ENCODE measurements at regions of chr7 and their contacts with region 1.

Region 1: DNA sequence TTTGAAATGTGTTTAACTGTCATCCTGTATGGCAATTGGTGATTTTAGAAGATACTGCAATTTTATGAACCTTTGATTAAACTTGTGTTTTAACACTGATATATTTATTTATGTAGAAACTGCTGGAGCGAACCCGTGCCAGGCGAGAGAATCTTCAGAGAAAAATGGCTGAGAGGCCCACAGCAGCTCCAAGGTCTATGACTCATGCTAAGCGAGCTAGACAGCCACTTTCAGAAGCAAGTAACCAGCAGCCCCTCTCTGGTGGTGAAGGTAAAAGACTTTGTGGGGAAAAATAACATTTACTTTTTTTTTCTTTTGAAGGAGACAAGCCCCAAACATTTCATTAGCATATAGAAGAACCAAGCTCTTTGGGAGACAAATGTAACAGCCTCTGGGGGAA is 6.5 kb downstream of the ANLN start:
- DNase-seq: no peak
- H3K4me3 ChIP-seq: no peak overlapping the region
- H3K27ac ChIP-seq: no peak overlapping the region; the same call in 1 of the 2 replicates
- H3K4me1 ChIP-seq: peaks cover 36% of the 10 kb centered on the region
- H3K27me3 ChIP-seq: no peaks in the 10 kb centered on the region
- CTCF ChIP-seq: no peak

Region 2: GRCh38 chr7:35716038-35716803 is 679.9 kb before region 1 on chr7:
- CTCF ChIA-PET with region 1: no interaction called
- POLR2A ChIA-PET with region 1: interaction called, 12 read pairs
- intact Hi-C with region 1: no loop called
- DNase-seq: no peak
- H3K4me3 ChIP-seq: no peak overlapping the region
- H3K27ac ChIP-seq: no peak overlapping the region
- H3K4me1 ChIP-seq: no peaks in the 10 kb centered on the region
- H3K27me3 ChIP-seq: no peaks in the 10 kb centered on the region
- CTCF ChIP-seq: no peak

Region 3: GRCh38 chr7:36207451-36208291 is 188.5 kb before region 1 on chr7:
- CTCF ChIA-PET with region 1: no interaction called
- POLR2A ChIA-PET with region 1: no interaction called
- intact Hi-C with region 1: no loop called
- DNase-seq: peak; percentile 51 to 100
- H3K4me3 ChIP-seq: no peak overlapping the region
- H3K27ac ChIP-seq: peak overlapping the region; percentile 75
- H3K4me1 ChIP-seq: peaks cover 38% of the 10 kb centered on the region
- H3K27me3 ChIP-seq: no peaks in the 10 kb centered on the region
- CTCF ChIP-seq: peak; percentile 46; the same call in 1 of the 2 replicates

Region 4: DNA sequence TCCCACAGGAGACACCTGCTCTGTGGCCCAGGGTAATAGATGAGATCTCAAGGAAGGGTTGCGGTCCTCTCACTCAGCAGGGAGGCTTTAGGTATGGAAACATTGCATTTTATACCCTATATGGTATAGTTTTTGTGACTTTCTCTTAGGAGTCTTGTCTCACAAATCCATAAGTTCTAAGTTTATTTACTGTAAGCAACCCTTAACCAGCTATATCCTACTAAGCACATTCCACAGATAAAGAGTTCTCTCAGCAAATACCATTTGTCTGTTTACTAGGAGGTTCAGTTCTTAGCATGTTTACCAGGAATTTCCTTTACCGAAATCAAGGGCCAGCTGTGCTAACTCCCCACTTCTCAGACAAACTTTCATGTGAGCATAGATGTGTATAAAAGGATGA is 60.4 kb after region 1 on chr7:
- CTCF ChIA-PET with region 1: no interaction called
- POLR2A ChIA-PET with region 1: no interaction called
- intact Hi-C with region 1: no loop called
- DNase-seq: no peak
- H3K4me3 ChIP-seq: no peak overlapping the region
- H3K27ac ChIP-seq: no peak overlapping the region
- H3K4me1 ChIP-seq: no peaks in the 10 kb centered on the region
- H3K27me3 ChIP-seq: no peaks in the 10 kb centered on the region
- CTCF ChIP-seq: no peak

Region 5: GRCh38 chr7:36708767-36709166 is 312.6 kb after region 1 on chr7:
- CTCF ChIA-PET with region 1: no interaction called
- POLR2A ChIA-PET with region 1: no interaction called
- intact Hi-C with region 1: no loop called
- DNase-seq: no peak
- H3K4me3 ChIP-seq: no peak overlapping the region
- H3K27ac ChIP-seq: no peak overlapping the region
- H3K4me1 ChIP-seq: no peaks in the 10 kb centered on the region
- H3K27me3 ChIP-seq: no peaks in the 10 kb centered on the region; the same call in none of the 2 replicates
- CTCF ChIP-seq: no peak

Measured in PC-9 (cell line).